ENCODE measurements at regions of chr17 and their contacts with region 1.

Region 1: GRCh38 chr17:4625181-4625617 is 16.3 kb downstream of the ALOX15 start:
- DNase-seq: no peak
- CTCF ChIP-seq: no peak

Region 2: GRCh38 chr17:4420692-4421131 is 204.5 kb before region 1 on chr17:
- in situ Hi-C with region 1: loop called (anchors 10 kb)
- DNase-seq: peak; percentile 80
- CTCF ChIP-seq: peak; percentile 77

Region 3: DNA sequence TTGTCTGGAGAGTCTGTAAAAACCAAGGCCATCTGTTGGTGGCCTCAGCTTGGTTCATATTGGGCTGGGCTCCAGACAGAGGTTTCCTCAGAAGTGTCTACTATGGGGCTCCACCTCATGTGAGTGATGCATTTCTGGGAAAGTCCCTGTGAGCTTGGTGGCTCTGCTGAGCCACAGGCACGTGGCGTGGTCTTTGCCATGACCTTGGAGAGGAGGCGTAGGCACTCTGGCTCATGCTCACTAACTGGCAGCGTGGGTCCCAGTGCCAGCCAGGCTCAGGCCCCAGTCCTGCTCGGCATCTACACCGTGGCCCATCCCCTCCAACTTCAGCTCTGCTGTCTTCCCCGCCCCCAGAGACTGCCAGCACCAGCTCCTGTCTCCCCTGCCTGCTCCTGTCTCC is 51.5 kb before region 1 on chr17:
- in situ Hi-C with region 1: loop called (anchors 10 kb)
- DNase-seq: peak; percentile 76
- CTCF ChIP-seq: no peak